ENCODE measurements at regions of chr15 and their contacts with region 1.

Region 1: DNA sequence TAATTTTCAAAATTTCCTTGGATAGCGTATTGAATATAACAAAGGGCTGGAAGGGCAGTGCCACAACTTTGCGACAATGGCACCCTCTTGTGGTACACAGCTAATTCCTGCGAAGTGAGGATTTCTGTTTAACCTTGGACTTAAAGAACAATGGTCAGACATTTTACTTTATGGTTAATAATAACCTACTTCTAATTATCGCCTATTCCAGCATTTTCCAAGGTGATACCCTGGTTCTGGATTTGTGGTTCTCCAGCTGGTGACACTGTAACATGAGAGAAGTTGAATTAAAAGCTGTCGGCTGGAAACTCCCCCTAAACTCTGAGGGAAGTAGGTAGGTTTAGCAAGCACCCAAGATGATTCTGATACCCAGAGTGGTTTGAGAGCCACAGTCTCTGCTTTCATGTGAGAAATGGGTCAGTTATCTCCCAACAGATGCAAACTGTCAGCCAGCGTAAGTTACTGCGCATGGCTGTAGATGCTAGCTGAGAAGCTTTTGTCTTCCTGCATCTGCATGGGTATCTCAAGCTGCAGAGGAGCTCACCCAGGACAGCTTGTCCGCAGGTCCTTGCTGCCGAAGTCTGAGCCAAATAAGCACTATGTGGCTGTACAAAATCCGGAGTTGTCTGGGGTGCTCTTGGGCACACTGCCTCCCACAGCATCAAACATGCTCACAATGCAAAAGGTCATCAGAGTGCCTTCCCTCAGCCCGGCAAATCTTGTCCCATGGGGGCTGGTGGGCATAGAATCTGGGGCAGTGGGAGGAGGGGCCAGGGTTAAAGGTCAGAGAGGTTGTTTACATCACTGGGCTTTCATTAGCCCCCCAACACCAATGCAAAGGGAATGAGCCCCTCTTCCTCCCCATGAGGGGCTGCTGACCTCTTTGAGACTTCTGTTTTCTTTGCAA is 6.6 kb upstream of the CHSY1 start:
- DNase-seq: peak; percentile 48
- CTCF ChIP-seq: peak; percentile 83

Region 2: DNA sequence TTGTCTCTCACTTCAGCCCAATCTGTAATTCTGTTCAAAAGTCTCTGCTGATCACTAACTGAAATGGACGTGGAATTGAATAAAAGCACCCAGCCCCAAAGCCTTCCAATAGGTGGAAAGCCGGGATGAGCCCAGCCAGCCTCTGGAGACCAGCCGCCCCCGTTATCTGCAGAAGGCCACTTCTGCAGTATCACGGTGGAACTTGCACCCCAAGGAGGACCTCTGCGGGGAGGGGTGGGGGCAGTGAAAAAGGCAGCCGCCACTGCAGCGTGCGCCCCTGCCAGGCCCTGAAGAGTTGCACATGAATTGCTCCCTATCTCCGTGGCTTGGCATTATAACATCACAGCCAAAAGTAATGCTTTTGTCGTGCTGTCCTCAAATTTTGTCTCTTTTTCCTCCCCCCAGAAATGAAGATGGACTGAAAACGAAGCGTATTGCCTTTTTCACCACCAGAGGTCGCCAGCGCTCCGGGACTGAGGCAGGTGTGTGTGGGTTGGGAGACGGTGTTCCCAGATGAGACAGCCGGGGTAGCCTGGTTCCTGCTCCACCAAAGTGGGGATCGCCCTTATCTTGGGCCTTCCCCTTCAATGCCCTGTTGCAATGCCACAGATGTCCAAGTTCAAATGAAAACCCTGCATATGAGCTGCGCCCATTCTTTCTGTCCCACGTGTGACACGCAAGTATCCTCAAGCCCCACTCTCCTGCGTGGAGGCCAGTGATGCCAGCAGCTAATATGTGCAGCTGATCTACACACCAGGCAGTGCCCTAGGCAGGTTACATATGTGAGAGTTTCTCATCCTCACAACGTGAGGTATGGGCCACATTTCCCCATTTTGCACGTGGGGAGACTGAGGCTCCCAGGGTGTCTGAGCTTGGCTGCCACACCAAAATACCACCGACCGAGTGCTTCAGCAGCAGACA is 243.3 kb before region 1 on chr15:
- CTCF ChIA-PET with region 1: interaction called, 23 read pairs
- POLR2A ChIA-PET with region 1: no interaction called
- DNase-seq: peak; percentile 79
- CTCF ChIP-seq: peak; percentile 87

Region 3: DNA sequence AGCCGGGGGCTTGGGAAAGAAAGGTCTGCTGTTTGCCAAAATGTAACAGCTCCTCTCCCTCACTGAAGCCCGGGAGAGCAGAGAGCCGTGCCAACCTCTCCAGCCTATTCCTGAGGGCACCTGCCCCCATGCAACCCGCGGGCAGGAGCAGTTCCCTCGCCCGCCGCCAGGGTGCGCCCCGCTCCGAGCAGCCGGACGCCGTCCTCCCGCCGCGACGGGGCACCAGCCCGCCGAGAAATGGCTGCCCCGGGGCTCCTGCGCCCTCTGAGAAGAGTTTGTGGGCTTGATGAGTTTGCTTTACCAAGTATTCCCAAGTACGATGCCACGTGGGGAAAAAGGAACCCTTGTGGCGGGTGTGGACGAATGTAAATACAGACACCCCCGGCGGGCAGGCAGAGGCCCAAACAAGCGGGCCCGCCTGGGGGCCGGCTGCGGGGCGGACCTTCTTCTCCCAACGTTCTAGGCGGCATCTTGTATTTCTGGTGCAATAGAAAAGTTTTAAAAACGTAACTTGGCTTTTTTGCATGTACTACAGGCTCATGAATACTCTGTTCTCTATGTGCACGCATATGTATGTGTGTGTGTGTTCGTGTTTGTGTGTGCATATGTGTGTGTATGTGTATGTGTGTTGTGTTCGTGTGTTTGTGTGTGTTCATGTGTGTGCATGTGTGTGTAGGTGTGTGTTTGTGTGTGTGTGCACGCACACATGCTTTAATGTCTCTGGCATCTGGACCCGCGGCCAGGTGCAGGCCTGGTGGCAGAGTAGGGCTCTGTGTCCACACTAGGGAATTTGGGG is 169.5 kb before region 1 on chr15:
- CTCF ChIA-PET with region 1: interaction called, 70 read pairs
- POLR2A ChIA-PET with region 1: no interaction called
- DNase-seq: peak; percentile 89
- CTCF ChIP-seq: peak; percentile 98

Region 4: GRCh38 chr15:101242160-101242998 is 16.1 kb before region 1 on chr15:
- CTCF ChIA-PET with region 1: interaction called, 46 read pairs
- POLR2A ChIA-PET with region 1: no interaction called
- DNase-seq: peak; percentile 77
- CTCF ChIP-seq: no peak

Region 5: DNA sequence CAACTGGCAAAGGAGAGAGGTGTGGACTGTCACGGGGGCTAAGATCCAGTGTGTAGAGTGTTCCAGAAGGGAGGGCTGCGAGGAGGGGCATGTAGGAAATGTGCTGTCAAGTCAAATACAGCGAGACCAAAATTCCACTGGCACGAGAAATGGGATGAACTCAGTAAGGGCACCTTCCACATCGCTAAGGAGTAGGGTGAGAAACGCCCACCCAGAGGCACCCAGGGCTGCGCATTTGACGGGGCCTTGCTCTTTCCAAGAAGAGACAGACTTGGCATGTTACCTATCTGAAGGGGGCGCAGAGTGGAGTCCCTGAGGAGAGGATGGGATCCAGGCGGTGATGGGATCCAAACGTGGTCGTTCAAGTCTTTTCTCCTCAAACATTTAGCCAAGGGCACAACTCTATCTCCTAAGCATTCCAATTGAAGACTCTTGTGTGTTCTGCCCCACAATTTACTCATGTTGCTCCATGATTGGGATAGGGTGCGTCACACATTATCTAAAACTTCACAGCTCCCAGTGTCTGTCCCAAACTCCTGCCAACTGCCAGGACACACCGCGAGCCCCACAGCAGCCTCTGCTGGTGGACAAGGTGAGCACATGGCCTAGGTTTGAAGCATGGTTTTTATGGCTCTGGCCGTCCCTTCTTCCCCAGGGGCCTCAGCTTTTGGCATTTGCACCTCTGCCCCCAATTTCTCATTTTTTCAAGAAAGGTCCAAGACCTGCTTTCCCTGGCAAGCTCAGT is 11.2 kb after region 1 on chr15:
- CTCF ChIA-PET with region 1: interaction called, 20 read pairs
- POLR2A ChIA-PET with region 1: no interaction called
- DNase-seq: no peak
- CTCF ChIP-seq: peak; percentile 38

Region 6: DNA sequence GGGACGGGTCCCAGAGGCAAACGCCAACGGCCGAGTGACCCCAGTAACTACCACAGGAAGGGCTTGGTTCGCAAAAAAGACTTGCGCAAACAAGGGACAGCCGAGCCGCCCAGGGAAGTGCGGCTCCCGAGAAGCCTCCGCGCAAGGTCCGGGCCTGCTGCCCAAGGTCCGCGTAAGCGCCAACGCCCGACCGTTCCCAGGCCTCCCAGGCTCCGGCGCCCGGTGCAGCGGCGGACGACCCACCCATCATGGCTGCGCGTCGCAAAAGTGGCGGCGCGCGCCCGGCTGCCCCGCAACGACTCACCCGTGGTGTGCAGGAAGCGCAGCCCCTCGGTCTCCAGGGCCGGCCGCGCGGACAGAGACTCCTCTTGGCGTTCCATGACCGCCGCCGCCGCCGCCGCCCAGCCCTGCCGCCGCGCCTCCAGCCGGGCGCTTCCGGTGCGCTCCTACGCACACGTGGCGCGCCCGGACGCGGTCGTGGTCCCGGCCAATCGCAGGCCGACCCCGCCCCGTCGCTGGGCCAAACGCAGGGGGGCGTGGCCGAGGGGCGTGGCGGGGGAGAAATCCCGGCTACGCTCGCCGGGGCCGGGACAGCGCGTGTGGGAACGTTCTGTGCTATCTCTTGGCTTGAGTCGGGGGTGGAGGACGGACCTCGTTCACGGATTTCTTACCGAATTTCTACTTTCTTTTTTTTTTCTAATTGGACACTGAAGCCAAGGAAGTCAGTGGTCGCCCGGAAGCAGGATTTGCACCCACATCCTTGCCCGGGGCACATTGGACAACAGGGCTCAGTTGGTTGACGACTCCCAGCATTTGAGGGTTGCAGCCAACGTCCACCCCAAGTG is 18.8 kb after region 1 on chr15 and contains the start of gene SELENOS:
- CTCF ChIA-PET with region 1: interaction called, 12 read pairs
- POLR2A ChIA-PET with region 1: no interaction called
- DNase-seq: peak; percentile 94
- CTCF ChIP-seq: no peak

Region 7: DNA sequence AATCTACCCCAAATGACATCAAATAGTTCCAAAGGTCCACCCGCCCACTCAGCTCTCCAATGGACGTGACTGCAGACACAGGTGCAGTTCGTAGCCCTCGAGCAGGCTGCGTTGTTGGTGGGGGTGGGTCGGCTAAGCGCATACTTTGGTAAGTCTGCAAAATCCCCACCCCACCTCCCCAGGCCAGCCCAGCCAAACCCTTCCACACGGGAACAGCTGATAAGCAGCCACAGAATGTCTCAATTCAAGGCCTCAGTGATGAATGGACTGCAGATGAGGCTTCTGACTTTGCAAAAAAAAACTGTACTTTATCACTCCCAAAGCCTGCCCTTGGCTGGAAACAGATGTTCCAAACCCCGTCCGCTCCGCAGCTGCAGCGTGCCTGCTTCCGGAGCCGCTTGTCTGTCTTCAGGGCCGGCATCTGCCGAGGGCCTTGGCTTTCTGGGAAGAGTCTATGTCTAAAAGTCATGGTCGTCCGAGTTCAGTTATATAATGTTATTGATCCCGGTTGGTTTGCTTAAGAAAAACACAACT is 192.8 kb after region 1 on chr15:
- CTCF ChIA-PET with region 1: no interaction called
- POLR2A ChIA-PET with region 1: no interaction called
- DNase-seq: peak; percentile 37
- CTCF ChIP-seq: no peak